Activated CD8-positive, alpha-beta T cell treated with anti-CD3 and anti-CD28 coated beads, Interleukin-2, amount 10 ng/mL, durations not matched to agents 7 days and 5 days (primary cell): ENCODE measurements at regions of chr1 and their contacts with region 1.

Region 1: GRCh38 chr1:165367375-165367993 is 11.0 kb upstream of the LMX1A start:
- DNase-seq: peak; percentile 83
- ATAC-seq: peak; percentile 74
- H3K4me3 Mint-ChIP-seq: no peak overlapping the region
- H3K27ac Mint-ChIP-seq: no peak overlapping the region
- H3K4me1 Mint-ChIP-seq: peaks cover 2% of the 10 kb centered on the region
- H3K27me3 Mint-ChIP-seq: peaks cover 38% of the 10 kb centered on the region

Region 2: GRCh38 chr1:165342587-165342986 is 24.9 kb before region 1 on chr1:
- CTCF ChIA-PET with region 1: interaction called, 23 read pairs
- POLR2A ChIA-PET with region 1: no interaction called
- DNase-seq: no peak
- ATAC-seq: no peak
- H3K4me3 Mint-ChIP-seq: no peak overlapping the region
- H3K27ac Mint-ChIP-seq: no peak overlapping the region
- H3K4me1 Mint-ChIP-seq: no peaks in the 10 kb centered on the region
- H3K27me3 Mint-ChIP-seq: peaks cover 30% of the 10 kb centered on the region

Region 3: GRCh38 chr1:165350840-165351239 is 16.6 kb before region 1 on chr1:
- CTCF ChIA-PET with region 1: interaction called, 32 read pairs
- POLR2A ChIA-PET with region 1: no interaction called
- DNase-seq: no peak
- ATAC-seq: no peak
- H3K4me3 Mint-ChIP-seq: no peak overlapping the region
- H3K27ac Mint-ChIP-seq: no peak overlapping the region
- H3K4me1 Mint-ChIP-seq: no peaks in the 10 kb centered on the region
- H3K27me3 Mint-ChIP-seq: peaks cover 78% of the 10 kb centered on the region

Region 4: DNA sequence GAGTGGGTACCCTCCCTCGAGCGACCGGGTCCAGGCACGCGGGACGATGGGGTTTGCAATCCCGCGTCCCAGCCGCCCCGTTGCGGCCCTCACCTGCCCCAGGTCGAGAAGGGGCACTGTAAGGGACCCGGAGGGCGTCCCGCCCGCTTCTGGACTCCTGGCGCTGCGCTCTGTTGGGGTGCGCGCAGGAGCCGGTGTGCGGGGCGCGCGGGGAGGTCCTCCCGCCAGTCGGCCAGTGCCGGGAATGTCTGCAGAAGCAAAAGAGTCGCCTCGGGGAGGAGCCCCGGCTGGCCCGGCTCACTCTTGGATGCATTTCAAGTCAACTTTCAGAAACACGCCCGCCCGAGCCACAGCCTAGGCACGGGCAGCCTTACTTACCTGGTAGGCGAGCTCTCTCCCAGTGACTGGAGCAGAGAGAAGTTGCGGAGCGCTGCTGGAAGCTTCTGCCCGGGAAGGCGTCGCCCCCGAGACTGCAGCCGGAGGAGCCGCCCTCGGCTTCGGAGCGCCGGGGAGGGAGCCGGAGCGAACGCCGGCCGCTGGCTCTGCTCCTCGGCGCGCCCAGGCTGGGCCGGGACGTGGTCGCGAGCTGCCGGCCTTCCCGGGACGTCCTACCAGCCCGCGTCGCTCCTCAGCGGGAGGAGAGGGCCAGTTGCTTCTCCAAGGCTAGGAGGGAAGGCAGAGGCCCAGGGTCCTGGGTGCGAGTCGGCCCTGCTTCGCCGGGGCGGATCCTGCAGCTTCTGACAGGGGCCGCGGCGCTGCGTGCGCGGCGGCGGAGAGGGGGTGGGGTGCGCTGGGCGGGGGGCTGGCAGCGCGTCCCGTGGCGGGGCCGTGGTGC is 11.3 kb before region 1 on chr1 and contains the start of gene LMX1A:
- CTCF ChIA-PET with region 1: interaction called, 32 read pairs
- POLR2A ChIA-PET with region 1: no interaction called
- DNase-seq: no peak
- ATAC-seq: no peak
- H3K4me3 Mint-ChIP-seq: no peak within 1 kb of the TSS
- H3K27ac Mint-ChIP-seq: no peak within 1 kb of the TSS
- H3K4me1 Mint-ChIP-seq: no peaks in the 10 kb centered on the region
- H3K27me3 Mint-ChIP-seq: peaks cover 71% of the 10 kb centered on the region
- total RNA-seq, gene LMX1A: not detected

Region 5: GRCh38 chr1:165383067-165383466 is 15.6 kb after region 1 on chr1:
- CTCF ChIA-PET with region 1: interaction called, 44 read pairs
- POLR2A ChIA-PET with region 1: no interaction called
- DNase-seq: no peak
- ATAC-seq: no peak
- H3K4me3 Mint-ChIP-seq: no peak overlapping the region
- H3K27ac Mint-ChIP-seq: no peak overlapping the region
- H3K4me1 Mint-ChIP-seq: no peaks in the 10 kb centered on the region
- H3K27me3 Mint-ChIP-seq: peaks cover 51% of the 10 kb centered on the region

Region 6: GRCh38 chr1:165392634-165393571 is 25.4 kb after region 1 on chr1:
- CTCF ChIA-PET with region 1: interaction called, 43 read pairs
- POLR2A ChIA-PET with region 1: no interaction called
- DNase-seq: peak; percentile 93
- ATAC-seq: peak; percentile 98
- H3K4me3 Mint-ChIP-seq: peak overlapping the region; percentile 65
- H3K27ac Mint-ChIP-seq: peak overlapping the region; percentile 87
- H3K4me1 Mint-ChIP-seq: peaks cover 17% of the 10 kb centered on the region
- H3K27me3 Mint-ChIP-seq: peaks cover 79% of the 10 kb centered on the region